ENCODE measurements at regions of chr1 and their contacts with region 1.

Region 1: DNA sequence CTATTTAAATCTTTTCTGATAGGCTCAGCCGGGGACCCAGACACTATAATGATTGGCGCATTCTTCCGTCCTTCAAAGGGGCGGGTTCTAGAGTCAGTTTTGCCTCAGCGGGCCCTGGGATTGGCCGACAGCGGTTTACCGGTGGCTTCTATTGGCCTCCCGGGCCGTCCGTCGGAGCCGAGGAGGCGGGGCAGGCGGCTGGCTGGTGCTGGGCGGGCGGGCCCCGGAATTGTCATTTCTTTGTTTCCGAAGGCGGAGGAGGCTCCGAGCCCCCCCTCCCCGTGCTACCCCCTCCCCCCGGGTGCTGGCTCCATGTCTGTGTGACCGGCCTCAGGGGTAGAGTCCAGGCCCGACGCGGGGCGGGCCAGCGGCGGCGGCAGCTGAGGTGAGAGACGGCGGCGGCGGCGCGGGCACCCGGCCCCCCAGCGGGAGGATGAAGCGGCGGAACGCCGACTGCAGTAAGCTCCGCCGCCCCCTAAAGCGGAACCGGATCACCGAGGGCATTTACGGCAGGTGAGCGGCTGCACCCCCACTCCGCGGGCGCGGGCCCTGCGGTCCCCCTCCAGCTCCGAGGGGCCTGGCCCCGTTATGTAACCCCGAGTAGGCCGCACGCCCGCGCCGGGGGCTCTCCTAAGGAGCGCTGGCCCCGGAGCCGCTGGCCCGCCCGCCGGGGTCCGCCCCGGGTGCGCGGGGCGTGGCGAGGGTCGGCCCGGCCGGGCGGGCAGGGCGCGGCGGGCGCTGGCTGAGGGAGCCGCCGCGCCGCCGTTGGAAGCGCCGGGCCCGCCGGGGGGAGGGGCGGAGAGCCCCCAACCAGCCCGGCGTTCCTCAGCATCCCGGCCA is at the start of gene MACO1:
- DNase-seq: peak; percentile 97
- ATAC-seq: peak; percentile 89
- H3K4me3 ChIP-seq: peak within 1 kb of the TSS; percentile 92
- H3K27ac ChIP-seq: peak within 1 kb of the TSS; percentile 63
- H3K4me1 ChIP-seq: peaks cover 34% of the 10 kb centered on the region
- H3K27me3 ChIP-seq: no peaks in the 10 kb centered on the region
- CTCF ChIP-seq: no peak
- total RNA-seq, gene MACO1: 13.6 and 14.0 TPM in 2 replicates

Region 2: GRCh38 chr1:25476186-25477097 is 45.6 kb after region 1 on chr1:
- CTCF ChIA-PET with region 1: no interaction called
- POLR2A ChIA-PET with region 1: no interaction called
- intact Hi-C with region 1: no loop called
- DNase-seq: no peak
- ATAC-seq: no peak
- H3K4me3 ChIP-seq: no peak overlapping the region
- H3K27ac ChIP-seq: no peak overlapping the region
- H3K4me1 ChIP-seq: peaks cover 17% of the 10 kb centered on the region
- H3K27me3 ChIP-seq: no peaks in the 10 kb centered on the region
- CTCF ChIP-seq: no peak

Region 3: DNA sequence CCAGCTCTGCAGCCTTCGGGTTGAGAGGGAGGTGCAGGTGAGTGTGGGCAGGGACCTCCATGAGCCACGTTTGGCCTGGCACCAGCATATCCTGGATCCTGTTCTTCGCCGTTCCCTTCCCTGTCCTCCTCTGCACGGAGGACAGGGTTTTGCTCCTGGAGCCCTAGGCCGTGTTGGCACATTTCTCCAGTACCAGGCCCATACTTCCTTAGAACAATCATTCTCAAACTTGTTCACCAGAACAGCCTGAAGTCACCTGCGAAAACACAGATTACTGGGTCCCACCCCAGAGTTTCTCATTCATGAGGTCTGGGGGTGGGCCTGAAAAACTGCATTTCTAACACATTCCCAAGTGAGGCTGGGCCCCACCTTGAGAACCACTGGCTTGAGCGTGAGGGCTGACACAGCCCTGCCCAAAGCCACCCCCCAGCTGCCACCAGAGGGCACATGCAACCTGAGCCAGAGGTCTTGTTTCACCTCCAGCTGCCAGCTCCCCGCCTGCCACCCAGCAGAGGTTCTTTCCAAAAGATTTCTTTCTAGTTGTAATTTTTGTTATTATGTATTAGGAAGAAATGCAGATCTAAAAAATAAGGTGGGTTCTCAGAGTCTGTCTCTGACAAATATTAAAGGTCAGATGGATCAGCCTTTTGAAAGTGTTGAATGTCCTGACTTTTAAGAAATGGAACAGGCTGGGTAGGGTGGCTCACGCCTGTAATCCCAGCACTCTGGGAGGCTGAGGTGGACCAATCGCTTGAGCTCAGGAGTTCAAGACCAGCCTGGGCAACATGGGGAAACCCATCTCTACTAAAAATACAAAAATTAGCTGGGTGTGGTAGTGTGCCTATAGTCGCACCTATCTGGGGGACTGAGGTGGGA is 72.9 kb after region 1 on chr1:
- CTCF ChIA-PET with region 1: no interaction called
- POLR2A ChIA-PET with region 1: no interaction called
- intact Hi-C with region 1: loop called (anchors 5 kb)
- DNase-seq: peak; percentile 62
- ATAC-seq: peak; percentile 94
- H3K4me3 ChIP-seq: no peak overlapping the region
- H3K27ac ChIP-seq: no peak overlapping the region
- H3K4me1 ChIP-seq: peaks cover 7% of the 10 kb centered on the region
- H3K27me3 ChIP-seq: no peaks in the 10 kb centered on the region
- CTCF ChIP-seq: peak; percentile 78

Region 4: DNA sequence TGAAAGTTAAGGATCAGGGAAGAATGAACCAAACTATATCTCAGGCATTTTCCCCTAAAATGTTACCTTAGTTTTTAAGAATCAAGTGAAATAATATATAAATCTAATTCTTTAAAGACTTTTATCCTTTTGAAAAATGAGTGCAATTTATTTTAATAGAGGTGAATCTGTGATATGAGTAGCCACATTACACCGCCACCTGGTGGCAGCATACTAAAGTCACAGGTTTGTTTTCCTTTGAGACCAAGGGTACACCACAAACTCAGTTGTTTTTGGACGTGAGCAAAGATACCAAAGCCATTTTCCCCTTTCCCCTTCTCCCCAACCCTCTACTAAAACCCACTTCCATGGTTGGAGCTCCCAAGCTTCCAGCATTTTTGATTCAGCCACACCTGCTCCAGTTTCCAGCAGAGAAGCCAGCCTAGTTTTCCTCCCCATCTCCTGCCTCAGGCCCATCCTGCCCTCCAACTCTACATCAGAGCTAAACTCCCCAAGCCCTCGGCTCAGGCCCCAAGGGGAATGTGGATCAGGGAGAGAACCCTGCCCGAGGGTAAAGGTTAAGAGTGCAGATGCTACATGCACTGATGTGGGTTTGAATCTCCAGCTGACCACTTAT is 89.7 kb after region 1 on chr1:
- CTCF ChIA-PET with region 1: interaction called, 14 read pairs
- POLR2A ChIA-PET with region 1: no interaction called
- intact Hi-C with region 1: no loop called
- DNase-seq: peak; percentile 70
- ATAC-seq: peak; percentile 65; the same call in 1 of the 2 replicates
- H3K4me3 ChIP-seq: no peak overlapping the region
- H3K27ac ChIP-seq: no peak overlapping the region
- H3K4me1 ChIP-seq: no peaks in the 10 kb centered on the region
- H3K27me3 ChIP-seq: no peaks in the 10 kb centered on the region
- CTCF ChIP-seq: peak; percentile 83

Measured in PC-3 (cell line).